Right ventricle myocardium inferior (tissue), 1 donor: ENCODE measurements at regions of chr12 and their contacts with region 1.

Region 1: DNA sequence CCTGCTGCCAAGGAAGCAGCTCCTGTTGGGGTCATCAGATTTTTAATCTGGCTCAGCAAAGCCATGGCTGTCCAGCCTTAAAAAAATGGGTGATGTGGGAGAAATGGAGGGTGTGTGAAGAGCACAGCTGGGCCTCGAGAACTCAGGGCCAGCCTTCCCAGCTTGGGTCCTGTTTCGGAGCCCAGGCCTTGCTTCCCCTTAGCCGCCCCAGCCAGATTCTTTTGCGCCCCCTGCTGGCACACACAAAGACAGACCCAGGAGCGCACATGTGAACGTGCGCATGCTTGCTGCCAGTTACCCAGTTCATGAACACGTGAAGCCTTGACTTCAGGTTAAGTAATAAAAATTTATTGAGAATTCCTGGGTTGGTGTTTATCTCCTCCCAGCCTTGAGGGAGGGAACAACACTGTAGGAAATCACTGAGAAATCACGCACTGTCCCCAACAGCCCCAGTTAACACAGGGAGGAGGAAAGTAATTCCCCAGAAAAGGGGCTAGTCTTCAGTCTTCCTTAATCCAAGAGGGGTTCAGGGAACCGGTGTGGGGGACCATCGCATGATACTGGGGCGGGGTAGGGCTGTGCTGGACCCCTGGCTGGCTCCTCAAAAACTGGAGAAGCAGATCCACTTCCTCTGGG is 5.3 kb downstream of the PHB2 start:
- DNase-seq: peak; percentile 91
- ATAC-seq: peak; percentile 80

Region 2: GRCh38 chr12:7018350-7019042 is 53.4 kb after region 1 on chr12 and contains the start of gene LPCAT3:
- intact Hi-C with region 1: loop called (anchors 1 kb)
- DNase-seq: peak; percentile 99
- ATAC-seq: peak; percentile 97
- total RNA-seq, gene LPCAT3: 54.7 TPM

Region 3: GRCh38 chr12:7060353-7060954 is 95.3 kb after region 1 on chr12 and contains the start of gene C1S:
- intact Hi-C with region 1: no loop called
- DNase-seq: no peak
- ATAC-seq: peak; percentile 98
- total RNA-seq, gene C1S: 153 TPM